Right cardiac atrium (tissue), 5 donors: ENCODE measurements at regions of chr10 and their contacts with region 1.

Region 1: DNA sequence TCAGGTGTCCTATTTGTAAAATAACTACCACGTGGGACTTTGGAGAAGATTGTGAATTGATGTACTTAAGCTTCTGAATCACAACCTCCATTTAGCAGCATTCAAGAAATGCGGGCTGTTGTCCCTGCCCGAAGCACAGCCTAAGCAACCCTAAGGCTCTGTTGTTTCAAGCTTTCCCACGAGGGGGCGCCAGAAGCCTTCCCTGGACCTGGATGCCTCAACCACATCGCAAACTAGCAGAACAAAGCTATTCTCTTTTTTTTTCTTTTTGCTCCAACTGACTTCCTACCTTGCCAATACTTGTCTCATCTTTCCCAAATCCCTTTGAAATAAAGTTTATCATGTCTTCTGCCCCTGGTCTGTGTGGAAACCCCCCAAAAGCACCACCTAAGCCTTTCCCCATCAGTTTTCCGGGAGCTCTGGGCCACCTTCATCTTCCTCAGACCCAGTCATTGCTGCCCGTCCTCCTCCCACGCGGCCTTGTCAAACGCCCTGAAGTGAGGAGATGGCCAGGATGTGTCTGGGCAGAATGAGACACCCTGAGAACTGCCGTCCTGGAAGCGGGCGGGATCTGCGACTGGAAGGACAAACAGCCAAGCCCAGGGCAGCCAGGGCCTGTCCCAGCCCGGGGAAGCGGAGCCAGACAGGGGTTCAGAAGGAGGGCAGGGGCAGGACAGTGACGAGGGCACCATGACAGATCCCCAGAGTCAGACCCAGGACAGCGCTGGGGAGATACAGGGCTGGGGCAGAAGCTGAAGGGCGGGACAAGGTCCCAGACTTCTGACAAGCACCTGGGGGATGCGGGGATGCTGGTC is 112.7 kb downstream of the SLIT1 start:
- DNase-seq: peak; percentile 75 to 93 (median 90)
- ATAC-seq: peak; percentile 58 to 83
- H3K4me3 ChIP-seq: no peak overlapping the region
- H3K27ac ChIP-seq: no peak overlapping the region
- H3K4me1 ChIP-seq: no peaks in the 10 kb centered on the region
- H3K27me3 ChIP-seq: no peaks in the 10 kb centered on the region

Region 2: DNA sequence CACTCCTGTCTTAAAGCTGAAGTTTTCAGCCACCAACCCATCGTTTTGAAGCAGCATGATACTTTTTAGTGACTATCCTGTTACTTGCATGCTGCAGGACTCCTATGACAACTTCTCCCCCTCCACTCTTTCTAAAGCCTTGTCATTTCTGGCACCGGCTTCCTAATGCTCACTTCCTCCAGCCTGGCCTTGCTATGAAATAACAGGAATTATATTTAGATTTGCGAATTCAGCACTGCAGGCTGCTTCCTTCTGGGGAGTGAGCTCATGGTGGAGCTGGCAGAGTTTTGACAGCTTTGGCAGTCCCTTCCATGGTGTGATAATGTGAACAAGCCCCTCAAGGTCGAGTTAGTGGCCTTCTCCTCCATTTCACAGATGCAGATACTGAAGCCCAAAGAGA is 815.1 kb before region 1 on chr10:
- intact Hi-C with region 1: no loop called
- DNase-seq: peak in 2 of 3 donors; percentile 55 to 58
- ATAC-seq: peak; percentile 73 to 80
- H3K4me3 ChIP-seq: no peak overlapping the region
- H3K27ac ChIP-seq: no peak overlapping the region
- H3K4me1 ChIP-seq: peaks cover 6% of the 10 kb centered on the region
- H3K27me3 ChIP-seq: no peaks in the 10 kb centered on the region

Region 3: DNA sequence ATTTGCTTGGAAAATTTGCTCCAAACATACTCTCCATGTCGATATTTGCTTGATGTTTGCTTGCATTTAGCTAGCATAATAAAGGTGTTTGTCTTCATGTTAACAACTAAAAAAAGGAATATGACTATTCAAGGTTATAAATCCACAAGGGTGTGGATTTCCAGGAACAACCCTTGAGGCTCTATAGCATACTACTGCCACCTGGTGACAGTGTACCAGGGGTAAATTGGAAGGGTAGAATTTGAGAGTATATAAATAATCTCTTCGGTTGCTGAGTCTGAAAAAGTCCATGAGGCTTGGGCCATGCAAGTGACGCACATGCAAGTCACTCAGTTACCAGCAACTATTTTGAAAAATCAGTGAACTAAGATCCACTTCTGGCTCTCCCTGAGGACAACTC is 44.3 kb after region 1 on chr10:
- intact Hi-C with region 1: loop called in 2 of 4 experiments (anchors 2 to 5 kb)
- DNase-seq: no peak
- ATAC-seq: no peak
- H3K4me3 ChIP-seq: no peak overlapping the region
- H3K27ac ChIP-seq: no peak overlapping the region
- H3K4me1 ChIP-seq: no peaks in the 10 kb centered on the region
- H3K27me3 ChIP-seq: no peaks in the 10 kb centered on the region

Region 4: GRCh38 chr10:97210543-97210961 is 137.5 kb after region 1 on chr10:
- intact Hi-C with region 1: loop called (anchors 2 to 5 kb)
- DNase-seq: peak; percentile 35 to 78 (median 78)
- ATAC-seq: peak; percentile 67 to 79
- H3K4me3 ChIP-seq: no peak overlapping the region
- H3K27ac ChIP-seq: no peak overlapping the region
- H3K4me1 ChIP-seq: no peaks in the 10 kb centered on the region
- H3K27me3 ChIP-seq: no peaks in the 10 kb centered on the region